ENCODE measurements at regions of chr22 and their contacts with region 1.

Region 1: DNA sequence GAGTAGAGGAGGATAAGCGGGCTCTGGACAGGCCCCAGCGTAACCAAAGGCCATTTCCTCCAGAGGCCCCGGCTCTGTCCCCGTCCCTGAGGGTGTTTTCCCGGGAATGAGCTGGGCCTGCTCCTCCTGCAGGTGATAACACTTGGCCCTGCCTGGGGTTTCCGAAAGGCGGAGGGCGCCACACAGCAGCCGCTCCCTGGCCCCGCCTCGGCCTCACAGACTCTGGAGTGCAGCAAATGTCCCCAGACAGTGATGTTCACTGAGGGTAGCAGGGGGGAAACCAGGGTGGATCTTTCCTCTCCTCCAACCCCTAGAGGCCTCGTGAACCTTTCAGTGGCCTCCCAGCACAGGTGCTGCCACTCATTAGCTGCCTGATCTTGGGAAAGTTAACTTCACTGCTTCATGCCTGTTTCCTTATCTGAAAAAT is 10.5 kb upstream of the MGAT3 start:
- DNase-seq: no peak
- ATAC-seq: peak; percentile 48
- H3K4me3 ChIP-seq: peak overlapping the region in 3 of 5 experiments; percentile 1 to 67 (median 54)
- H3K4me3 Mint-ChIP-seq: peak overlapping the region; percentile 90
- H3K27ac ChIP-seq: peak overlapping the region; percentile 60 to 89
- H3K27ac Mint-ChIP-seq: peak overlapping the region; percentile 95
- H3K4me1 ChIP-seq: peaks cover 69 to 81% of the 10 kb centered on the region in 2 donors
- H3K4me1 Mint-ChIP-seq: peaks cover 77% of the 10 kb centered on the region
- H3K27me3 ChIP-seq: no peaks in the 10 kb centered on the region
- H3K27me3 Mint-ChIP-seq: no peaks in the 10 kb centered on the region
- CTCF ChIP-seq: no peak

Region 2: DNA sequence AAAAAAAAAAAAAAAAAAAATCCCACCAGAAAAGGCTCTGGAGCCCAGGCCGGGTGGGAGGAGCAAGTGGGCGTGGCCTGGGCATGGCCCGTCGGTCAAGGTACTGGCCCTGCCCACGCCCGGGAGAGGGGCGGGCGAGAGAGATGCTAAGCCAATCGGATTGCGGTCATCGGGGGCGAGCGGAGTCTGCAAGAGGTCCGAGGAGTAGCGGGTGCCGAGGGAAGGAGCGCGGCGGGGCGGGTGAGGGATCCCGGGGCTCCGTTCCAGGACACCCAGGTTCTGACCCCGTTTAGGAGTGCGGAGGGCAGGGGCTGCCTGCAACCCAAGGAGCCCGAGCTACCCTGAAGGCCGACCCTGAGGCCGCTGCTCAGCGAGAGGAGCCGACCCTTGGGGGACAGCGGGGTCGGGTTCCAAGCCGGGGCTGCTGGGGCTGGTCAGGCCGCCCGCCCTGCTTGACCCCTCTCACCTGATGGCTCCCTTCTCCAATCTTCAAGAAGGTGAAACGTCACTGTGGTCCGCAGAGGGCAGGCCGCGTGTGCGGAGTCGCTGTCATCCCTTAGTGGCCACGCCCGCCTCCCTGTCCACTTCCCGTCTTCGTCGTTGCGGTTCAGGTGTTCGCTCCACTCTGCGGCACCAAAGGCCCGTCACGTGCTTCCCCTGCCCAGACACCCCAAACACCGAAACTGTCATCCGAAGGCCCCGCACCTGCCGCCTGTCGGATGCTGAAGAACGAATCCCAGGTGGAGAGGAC is 57.9 kb before region 1 on chr22:
- CTCF ChIA-PET with region 1: interaction called, 3 read pairs
- POLR2A ChIA-PET with region 1: interaction called, 7 read pairs
- intact Hi-C with region 1: loop called (anchors 5 kb)
- DNase-seq: peak; percentile 91
- ATAC-seq: peak; percentile 88
- H3K4me3 ChIP-seq: peak overlapping the region in 4 of 5 experiments; percentile 61 to 76 (median 69)
- H3K4me3 Mint-ChIP-seq: peak overlapping the region; percentile 90
- H3K27ac ChIP-seq: peak overlapping the region; percentile 68 to 70
- H3K27ac Mint-ChIP-seq: peak overlapping the region; percentile 91
- H3K4me1 ChIP-seq: peaks cover 0 to 14% of the 10 kb centered on the region in 2 donors
- H3K4me1 Mint-ChIP-seq: peaks cover 10% of the 10 kb centered on the region
- H3K27me3 ChIP-seq: no peaks in the 10 kb centered on the region
- H3K27me3 Mint-ChIP-seq: no peaks in the 10 kb centered on the region
- CTCF ChIP-seq: peak; percentile 22

Region 3: DNA sequence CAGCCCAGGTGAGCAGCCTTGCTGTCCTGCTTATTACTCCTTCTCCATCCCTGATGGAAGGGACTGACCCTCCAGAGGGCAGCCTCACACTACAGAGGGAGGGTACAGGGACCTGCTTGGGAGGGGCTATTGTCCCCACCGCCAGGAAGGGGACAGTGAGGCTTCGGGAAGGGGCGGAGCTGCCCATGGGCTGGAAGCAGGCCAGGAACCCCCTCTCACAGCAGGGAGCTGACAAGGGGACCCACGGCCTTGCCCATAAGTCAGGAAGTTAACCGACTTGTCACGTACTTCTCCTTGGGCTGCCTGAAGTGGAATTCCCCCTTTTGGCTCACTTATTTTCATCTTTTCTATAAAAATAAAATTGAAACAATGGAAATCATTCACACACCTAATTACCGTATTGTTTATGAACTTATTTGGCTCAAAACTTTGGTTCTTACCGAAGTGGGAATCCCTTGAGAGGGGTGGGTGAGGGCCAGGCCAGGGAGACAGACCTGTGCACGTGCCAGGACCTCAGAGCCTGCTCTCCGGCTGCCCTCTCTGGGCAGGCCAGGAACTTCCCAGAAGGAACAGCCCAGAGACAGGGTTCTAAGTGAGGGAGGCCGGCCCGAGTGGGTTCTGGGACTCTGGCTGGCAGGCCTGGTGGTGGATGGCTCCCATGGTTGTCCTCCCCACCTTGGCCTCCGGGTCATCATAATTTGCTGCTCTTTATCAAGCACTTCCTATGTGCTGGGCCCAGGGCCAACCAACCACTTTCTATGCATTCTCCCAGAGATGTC is 16.3 kb after region 1 on chr22:
- CTCF ChIA-PET with region 1: interaction called, 8 read pairs
- POLR2A ChIA-PET with region 1: interaction called, 23 read pairs
- intact Hi-C with region 1: loop called (anchors 1 kb)
- DNase-seq: peak; percentile 67
- ATAC-seq: peak; percentile 19
- H3K4me3 ChIP-seq: no peak overlapping the region
- H3K4me3 Mint-ChIP-seq: peak overlapping the region; percentile 50
- H3K27ac ChIP-seq: peak overlapping the region; percentile 75 to 83
- H3K27ac Mint-ChIP-seq: peak overlapping the region; percentile 62
- H3K4me1 ChIP-seq: peaks cover 60 to 75% of the 10 kb centered on the region in 2 donors
- H3K4me1 Mint-ChIP-seq: peaks cover 77% of the 10 kb centered on the region
- H3K27me3 ChIP-seq: peaks cover 0 to 10% (median 4%) of the 10 kb centered on the region in 4 experiments
- H3K27me3 Mint-ChIP-seq: peaks cover 6% of the 10 kb centered on the region
- CTCF ChIP-seq: no peak

Region 4: GRCh38 chr22:39490135-39490798 is 44.0 kb after region 1 on chr22:
- CTCF ChIA-PET with region 1: interaction called, 23 read pairs
- POLR2A ChIA-PET with region 1: interaction called, 9 read pairs
- intact Hi-C with region 1: loop called (anchors 2 kb)
- DNase-seq: peak; percentile 86
- ATAC-seq: peak; percentile 98
- H3K4me3 ChIP-seq: peak overlapping the region in 2 of 5 experiments; percentile 12 to 37
- H3K4me3 Mint-ChIP-seq: peak overlapping the region; percentile 59
- H3K27ac ChIP-seq: no peak overlapping the region
- H3K27ac Mint-ChIP-seq: peak overlapping the region; percentile 79
- H3K4me1 ChIP-seq: peaks cover 4 to 14% of the 10 kb centered on the region in 2 donors
- H3K4me1 Mint-ChIP-seq: peaks cover 21% of the 10 kb centered on the region
- H3K27me3 ChIP-seq: no peaks in the 10 kb centered on the region
- H3K27me3 Mint-ChIP-seq: no peaks in the 10 kb centered on the region
- CTCF ChIP-seq: no peak

Region 5: DNA sequence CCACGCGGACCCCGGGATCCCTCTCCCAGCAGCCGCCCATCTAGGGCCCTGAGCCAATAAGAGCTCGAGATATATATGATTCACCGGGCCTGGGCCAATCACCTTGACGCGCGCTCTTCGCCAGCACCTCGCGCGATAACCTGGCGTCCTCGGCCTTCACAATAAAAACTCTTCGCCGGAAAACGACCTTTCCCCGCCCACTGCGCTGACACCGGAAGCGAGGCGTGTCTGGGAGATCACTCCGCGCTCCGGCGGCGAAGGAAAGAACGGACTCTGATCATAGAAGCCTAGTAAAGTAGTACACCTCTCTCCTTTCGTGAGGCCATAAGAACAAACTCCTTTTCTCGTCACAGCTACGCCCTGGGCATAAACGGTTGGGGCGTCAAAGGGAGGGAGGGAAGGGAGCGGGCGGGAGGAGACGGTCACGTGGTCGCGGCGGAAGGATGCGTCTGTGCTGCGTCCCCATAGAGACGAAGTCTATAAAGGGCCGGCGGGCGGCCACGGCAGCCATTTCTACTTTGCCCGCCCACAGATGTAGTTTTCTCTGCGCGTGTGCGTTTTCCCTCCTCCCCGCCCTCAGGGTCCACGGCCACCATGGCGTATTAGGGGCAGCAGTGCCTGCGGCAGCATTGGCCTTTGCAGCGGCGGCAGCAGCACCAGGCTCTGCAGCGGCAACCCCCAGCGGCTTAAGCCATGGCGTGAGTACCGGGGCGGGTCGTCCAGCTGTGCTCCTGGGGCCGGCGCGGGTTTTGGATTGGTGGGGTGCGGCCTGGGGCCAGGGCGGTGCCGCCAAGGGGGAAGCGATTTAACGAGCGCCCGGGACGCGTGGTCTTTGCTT is 74.0 kb after region 1 on chr22 and contains the start of gene ATF4:
- CTCF ChIA-PET with region 1: interaction called, 6 read pairs
- POLR2A ChIA-PET with region 1: interaction called, 15 read pairs
- intact Hi-C with region 1: loop called (anchors 2 kb)
- DNase-seq: peak; percentile 100
- ATAC-seq: peak; percentile 89
- H3K4me3 ChIP-seq: peak within 1 kb of the TSS; percentile 82 to 100 (median 99)
- H3K4me3 Mint-ChIP-seq: peak within 1 kb of the TSS; percentile 94
- H3K27ac ChIP-seq: peak within 1 kb of the TSS; percentile 91 to 95
- H3K27ac Mint-ChIP-seq: peak within 1 kb of the TSS; percentile 98
- H3K4me1 ChIP-seq: peaks cover 31 to 49% of the 10 kb centered on the region in 2 donors
- H3K4me1 Mint-ChIP-seq: peaks cover 59% of the 10 kb centered on the region
- H3K27me3 ChIP-seq: no peaks in the 10 kb centered on the region
- H3K27me3 Mint-ChIP-seq: no peaks in the 10 kb centered on the region
- CTCF ChIP-seq: no peak
- total RNA-seq, gene ATF4: 236 and 244 TPM in 2 replicates

Measured in B cell (primary cell).